ENCODE measurements at regions of chr7 and their contacts with region 1.

Region 1: GRCh38 chr7:135509903-135510602 is at the start of gene CNOT4:
- DNase-seq: peak; percentile 91 to 98 (median 95)
- H3K4me3 ChIP-seq: peak within 1 kb of the TSS; percentile 73 to 85
- H3K4me3 Mint-ChIP-seq: no peak within 1 kb of the TSS
- H3K27ac ChIP-seq: peak within 1 kb of the TSS; percentile 95
- H3K27ac Mint-ChIP-seq: no peak within 1 kb of the TSS
- H3K4me1 ChIP-seq: peaks cover 34% of the 10 kb centered on the region
- H3K4me1 Mint-ChIP-seq: peaks cover 2 to 12% (median 6%) of the 10 kb centered on the region in 4 donors
- H3K27me3 ChIP-seq: no peaks in the 10 kb centered on the region
- H3K27me3 Mint-ChIP-seq: no peaks in the 10 kb centered on the region
- total RNA-seq, gene CNOT4: 33.9 to 35.0 TPM

Region 2: DNA sequence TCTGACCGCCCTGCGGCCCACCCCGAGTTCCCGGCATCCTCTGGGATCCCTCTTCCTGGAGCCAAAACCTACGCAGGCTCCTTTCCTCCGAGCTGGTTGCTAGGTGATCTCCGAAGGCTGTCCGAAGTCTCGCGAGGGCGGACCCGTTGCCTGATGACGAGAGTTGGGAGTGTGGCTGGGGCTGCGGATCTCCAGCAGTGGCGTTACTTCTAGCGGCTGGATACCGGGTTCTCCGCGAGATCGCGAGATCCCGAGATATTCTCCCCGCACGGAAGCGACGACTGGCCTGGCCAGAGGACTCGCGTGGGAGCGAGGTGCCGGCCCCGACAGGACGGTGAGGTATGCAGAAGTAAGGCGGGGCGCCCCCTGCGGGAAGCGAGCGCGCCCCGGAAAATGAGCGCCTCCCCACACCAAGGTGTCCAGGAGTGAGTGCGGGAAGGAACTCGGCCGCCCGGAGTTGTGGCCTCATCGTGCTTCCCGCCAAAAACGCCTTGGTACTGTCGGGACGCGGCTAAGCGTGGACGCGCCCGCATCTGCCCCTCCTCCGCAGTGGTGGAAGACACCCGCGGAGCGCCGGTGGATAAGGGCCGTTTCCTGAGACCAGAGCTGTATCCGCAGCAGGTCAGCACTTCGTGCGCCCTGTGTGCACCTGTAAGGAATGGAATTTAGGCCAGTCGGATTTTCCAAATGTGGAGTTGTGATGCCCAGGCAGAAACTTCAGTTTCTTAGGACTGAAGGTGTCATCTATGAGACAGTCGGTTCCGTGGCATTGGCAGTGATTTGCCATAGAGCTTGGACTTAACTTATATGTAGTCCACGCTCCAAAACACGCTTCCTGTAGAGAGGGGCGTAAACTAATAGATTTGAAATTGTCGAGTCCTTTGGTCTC is 523.4 kb before region 1 on chr7 and contains the start of gene AGBL3:
- CTCF ChIA-PET with region 1: no interaction called
- POLR2A ChIA-PET with region 1: no interaction called
- intact Hi-C with region 1: loop called (anchors 1 kb)
- DNase-seq: peak; percentile 87 to 91 (median 88)
- H3K4me3 ChIP-seq: peak within 1 kb of the TSS; percentile 60 to 86
- H3K4me3 Mint-ChIP-seq: peak within 1 kb of the TSS; percentile 96 to 99 (median 98)
- H3K27ac ChIP-seq: peak within 1 kb of the TSS; percentile 80
- H3K27ac Mint-ChIP-seq: peak within 1 kb of the TSS; percentile 98 to 100 (median 98)
- H3K4me1 ChIP-seq: peaks cover 20% of the 10 kb centered on the region
- H3K4me1 Mint-ChIP-seq: peaks cover 26 to 41% (median 31%) of the 10 kb centered on the region in 4 donors
- H3K27me3 ChIP-seq: no peaks in the 10 kb centered on the region
- H3K27me3 Mint-ChIP-seq: no peaks in the 10 kb centered on the region
- total RNA-seq, gene AGBL3: 5.5 to 6.2 TPM

Region 3: GRCh38 chr7:135558337-135558767 is 48.3 kb after region 1 on chr7:
- CTCF ChIA-PET with region 1: interaction called, 3 read pairs
- POLR2A ChIA-PET with region 1: interaction called, 18 read pairs
- intact Hi-C with region 1: loop called (anchors 1 kb)
- DNase-seq: peak; percentile 68 to 80 (median 70)
- H3K4me3 ChIP-seq: peak overlapping the region; percentile 92 to 96
- H3K4me3 Mint-ChIP-seq: no peak overlapping the region
- H3K27ac ChIP-seq: peak overlapping the region; percentile 92
- H3K27ac Mint-ChIP-seq: no peak overlapping the region
- H3K4me1 ChIP-seq: peaks cover 24% of the 10 kb centered on the region
- H3K4me1 Mint-ChIP-seq: peaks cover 17 to 23% (median 19%) of the 10 kb centered on the region in 4 donors
- H3K27me3 ChIP-seq: no peaks in the 10 kb centered on the region
- H3K27me3 Mint-ChIP-seq: peaks cover 0 to 2% of the 10 kb centered on the region in 2 donors

Region 4: DNA sequence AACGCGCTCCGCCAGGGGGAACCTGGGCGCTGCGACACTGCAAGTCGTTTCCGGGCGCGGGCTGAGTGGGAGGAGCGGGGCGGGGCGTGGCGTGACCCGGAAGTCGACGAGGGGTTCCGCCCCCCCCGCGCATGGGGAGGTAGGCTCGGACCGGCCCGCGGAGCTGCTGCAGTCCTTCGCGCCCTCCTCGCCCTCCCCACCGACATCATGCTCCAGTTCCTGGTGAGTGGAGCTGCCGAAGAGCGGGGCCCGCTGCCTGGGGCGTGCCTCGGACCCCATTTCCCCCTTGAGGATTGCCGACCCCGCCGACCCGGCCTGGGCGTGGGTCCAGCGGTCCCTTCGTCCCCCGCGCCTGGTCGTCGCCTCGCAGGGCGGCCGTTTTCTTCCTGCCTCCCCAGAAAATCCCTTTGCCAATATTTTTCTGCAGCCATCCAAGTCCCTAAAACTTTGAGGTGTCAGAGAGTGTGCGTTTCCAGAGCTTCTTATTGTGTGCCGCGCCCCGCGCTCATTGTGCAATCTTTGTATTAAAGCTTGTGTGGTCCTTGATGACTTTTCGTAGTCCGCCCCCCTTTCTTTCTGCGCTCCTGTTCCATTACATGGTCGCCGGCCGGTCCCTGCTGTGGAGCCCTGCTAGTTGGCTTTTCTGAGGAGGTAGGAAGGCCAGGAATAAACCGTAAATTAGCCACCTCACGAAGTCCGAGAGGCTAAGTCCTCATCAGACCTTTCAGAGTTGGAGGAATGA is 152.5 kb after region 1 on chr7 and contains the start of gene STMP1:
- CTCF ChIA-PET with region 1: interaction called, 3 read pairs
- POLR2A ChIA-PET with region 1: no interaction called
- intact Hi-C with region 1: loop called (anchors 1 kb)
- DNase-seq: peak; percentile 92 to 94 (median 93)
- H3K4me3 ChIP-seq: peak within 1 kb of the TSS; percentile 86 to 98
- H3K4me3 Mint-ChIP-seq: peak within 1 kb of the TSS; percentile 91 to 98 (median 96)
- H3K27ac ChIP-seq: peak within 1 kb of the TSS; percentile 76
- H3K27ac Mint-ChIP-seq: peak within 1 kb of the TSS; percentile 83 to 98 (median 95)
- H3K4me1 ChIP-seq: peaks cover 30% of the 10 kb centered on the region
- H3K4me1 Mint-ChIP-seq: peaks cover 25 to 52% (median 38%) of the 10 kb centered on the region in 4 donors
- H3K27me3 ChIP-seq: no peaks in the 10 kb centered on the region
- H3K27me3 Mint-ChIP-seq: no peaks in the 10 kb centered on the region
- total RNA-seq, gene STMP1: 29.5 to 29.7 TPM